ENCODE measurements at regions of chr17 and their contacts with region 1.

Region 1: GRCh38 chr17:31696184-31696602 is 162.9 kb downstream of the COPRS start:
- DNase-seq: no peak
- H3K4me3 ChIP-seq: no peak overlapping the region
- H3K27ac ChIP-seq: no peak overlapping the region
- H3K4me1 ChIP-seq: peaks cover 4% of the 10 kb centered on the region
- H3K27me3 ChIP-seq: no peaks in the 10 kb centered on the region
- CTCF ChIP-seq: no peak

Region 2: GRCh38 chr17:31596382-31597323 is 99.5 kb before region 1 on chr17:
- dilution Hi-C with region 1: loop called (anchors 25 kb)
- DNase-seq: peak; percentile 76
- H3K4me3 ChIP-seq: peak overlapping the region in 2 of 3 experiments; percentile 20 to 29
- H3K27ac ChIP-seq: peak overlapping the region; percentile 86
- H3K4me1 ChIP-seq: peaks cover 42% of the 10 kb centered on the region
- H3K27me3 ChIP-seq: no peaks in the 10 kb centered on the region
- CTCF ChIP-seq: peak in 1 of 3 experiments; percentile 22

Region 3: GRCh38 chr17:31631766-31632165 is 64.4 kb before region 1 on chr17:
- dilution Hi-C with region 1: no loop called
- DNase-seq: no peak
- H3K4me3 ChIP-seq: no peak overlapping the region
- H3K27ac ChIP-seq: no peak overlapping the region
- H3K4me1 ChIP-seq: no peaks in the 10 kb centered on the region
- H3K27me3 ChIP-seq: no peaks in the 10 kb centered on the region
- CTCF ChIP-seq: no peak

Region 4: DNA sequence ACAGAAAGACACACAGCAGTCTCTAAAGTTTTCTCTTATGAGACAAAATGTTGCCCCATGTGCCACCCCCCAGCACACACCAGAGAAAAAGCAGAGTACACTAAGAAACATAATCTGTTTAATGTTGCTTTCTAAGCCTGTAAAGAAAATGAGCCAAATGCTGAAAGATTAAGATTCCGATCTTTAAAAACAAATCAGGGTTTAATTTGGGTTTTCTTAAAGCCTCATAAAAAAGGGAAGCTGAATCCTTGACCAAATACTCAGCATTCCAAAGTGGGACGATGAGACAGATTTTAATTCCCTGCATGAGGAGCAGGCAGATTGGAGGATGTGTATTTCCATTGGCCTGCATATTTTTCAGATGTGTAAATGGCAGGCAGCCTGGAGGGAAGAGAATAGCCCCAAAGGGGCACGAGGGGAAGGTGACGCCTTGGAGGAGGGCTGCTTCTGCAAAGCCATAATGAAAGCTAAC is 44.5 kb after region 1 on chr17:
- dilution Hi-C with region 1: no loop called
- DNase-seq: no peak
- H3K4me3 ChIP-seq: no peak overlapping the region
- H3K27ac ChIP-seq: no peak overlapping the region
- H3K4me1 ChIP-seq: no peaks in the 10 kb centered on the region
- H3K27me3 ChIP-seq: no peaks in the 10 kb centered on the region
- CTCF ChIP-seq: no peak